ENCODE measurements at regions of chr15 and their contacts with region 1.

Region 1: DNA sequence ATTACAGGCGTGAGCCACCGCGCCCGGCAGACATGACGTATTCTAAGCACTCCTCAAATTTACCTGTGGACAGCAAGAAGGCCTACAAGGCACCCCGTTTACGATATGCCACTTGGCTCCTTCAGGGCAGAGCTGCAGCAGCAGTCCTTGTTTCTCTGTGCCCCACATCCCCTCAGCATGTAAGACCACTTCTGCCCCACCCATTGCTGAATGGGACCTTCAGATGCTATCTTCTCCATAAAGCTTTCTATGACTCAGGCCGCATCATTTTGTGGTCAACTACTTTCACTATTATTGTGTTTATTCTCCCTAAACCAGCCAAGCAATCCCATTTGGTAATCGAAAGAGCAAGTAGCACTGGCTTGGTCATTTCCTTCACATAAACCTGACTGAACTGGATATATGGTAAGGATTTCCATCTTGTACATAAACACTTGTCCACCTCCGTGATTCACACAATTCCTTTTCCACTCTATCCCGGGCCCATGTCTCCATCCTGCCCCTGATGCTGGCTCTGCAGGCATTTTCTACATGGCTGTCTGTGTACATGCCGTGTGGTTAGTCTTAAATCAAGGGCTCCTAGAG is 25.7 kb downstream of the LIPC start:
- DNase-seq: peak; percentile 26
- H3K4me3 Mint-ChIP-seq: peak overlapping the region; percentile 29
- H3K27ac Mint-ChIP-seq: peak overlapping the region; percentile 84
- H3K4me1 Mint-ChIP-seq: peaks cover 87% of the 10 kb centered on the region
- H3K27me3 Mint-ChIP-seq: no peaks in the 10 kb centered on the region

Region 2: GRCh38 chr15:58331903-58332675 is 125.4 kb before region 1 on chr15:
- intact Hi-C with region 1: loop called (anchors 1 kb)
- DNase-seq: peak; percentile 84
- H3K4me3 Mint-ChIP-seq: peak overlapping the region; percentile 43
- H3K27ac Mint-ChIP-seq: peak overlapping the region; percentile 95
- H3K4me1 Mint-ChIP-seq: peaks cover 44% of the 10 kb centered on the region
- H3K27me3 Mint-ChIP-seq: no peaks in the 10 kb centered on the region

Region 3: GRCh38 chr15:58469432-58470353 is 12.2 kb after region 1 on chr15:
- intact Hi-C with region 1: loop called (anchors 1 kb)
- DNase-seq: no peak
- H3K4me3 Mint-ChIP-seq: no peak overlapping the region
- H3K27ac Mint-ChIP-seq: no peak overlapping the region
- H3K4me1 Mint-ChIP-seq: peaks cover 59% of the 10 kb centered on the region
- H3K27me3 Mint-ChIP-seq: no peaks in the 10 kb centered on the region

Region 4: GRCh38 chr15:58546635-58547627 is 89.5 kb after region 1 on chr15:
- intact Hi-C with region 1: loop called (anchors 1 kb)
- DNase-seq: no peak
- H3K4me3 Mint-ChIP-seq: no peak overlapping the region
- H3K27ac Mint-ChIP-seq: peak overlapping the region; percentile 97
- H3K4me1 Mint-ChIP-seq: peaks cover 63% of the 10 kb centered on the region
- H3K27me3 Mint-ChIP-seq: no peaks in the 10 kb centered on the region

Region 5: GRCh38 chr15:58641660-58642059 is 184.2 kb after region 1 on chr15:
- intact Hi-C with region 1: no loop called
- DNase-seq: no peak
- H3K4me3 Mint-ChIP-seq: no peak overlapping the region
- H3K27ac Mint-ChIP-seq: no peak overlapping the region
- H3K4me1 Mint-ChIP-seq: peaks cover 21% of the 10 kb centered on the region
- H3K27me3 Mint-ChIP-seq: no peaks in the 10 kb centered on the region

Measured in activated T-helper 1 cell treated with anti-CD3 and anti-CD28 coated beads, Interleukin-12 subunit alpha, Interleukin-12 subunit beta, Interleukin-2, Interleukin-4 antibody, amounts not matched to agents 30 ng/mL and 10 ng/mL and 1 ng/mL, durations not matched to agents 14 hours and 24 hours and 36 hours (primary cell).